Lower leg skin (tissue), 4 donors: ENCODE measurements at regions of chr1 and their contacts with region 1.

Region 1: DNA sequence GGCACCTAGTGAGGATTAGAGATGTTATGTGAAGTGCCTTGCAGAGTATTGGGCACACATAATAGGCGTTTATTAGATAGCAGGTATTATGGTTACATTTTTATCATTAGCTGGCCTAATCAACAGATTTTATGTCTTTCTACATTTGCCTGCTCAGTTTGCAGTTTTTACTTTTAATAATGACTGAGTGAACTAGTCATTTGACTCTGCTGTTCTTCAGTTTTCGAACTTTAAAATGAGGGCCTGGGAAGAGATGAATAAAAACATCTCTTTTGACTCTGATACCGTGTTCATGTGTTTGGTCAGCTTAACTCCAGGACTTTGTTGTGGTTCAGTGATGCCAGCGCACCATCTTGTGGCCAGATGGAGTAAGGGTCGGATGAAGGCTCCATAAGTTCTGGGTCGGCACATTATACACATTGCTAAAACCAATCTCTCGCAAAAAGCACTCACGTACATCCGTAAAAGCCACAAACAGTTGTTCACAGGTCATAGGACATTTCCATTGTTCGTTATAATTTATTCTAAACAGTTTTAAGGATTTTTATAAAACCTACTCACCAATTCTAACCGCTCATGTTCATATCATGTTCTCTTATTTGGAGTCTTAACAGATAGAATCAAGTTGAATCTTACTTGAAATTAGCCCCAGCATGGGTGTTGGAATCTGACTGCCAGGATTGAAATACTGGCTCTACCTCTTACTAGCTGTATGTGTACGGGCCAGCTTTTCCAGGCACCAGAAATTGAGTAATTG is 78.4 kb upstream of the GPR88 start:
- DNase-seq: peak; percentile 75 to 92
- H3K4me3 ChIP-seq: no peak overlapping the region
- CTCF ChIP-seq: peak in 1 of 3 donors; percentile 81
- POLR2A ChIP-seq: no peak

Region 2: DNA sequence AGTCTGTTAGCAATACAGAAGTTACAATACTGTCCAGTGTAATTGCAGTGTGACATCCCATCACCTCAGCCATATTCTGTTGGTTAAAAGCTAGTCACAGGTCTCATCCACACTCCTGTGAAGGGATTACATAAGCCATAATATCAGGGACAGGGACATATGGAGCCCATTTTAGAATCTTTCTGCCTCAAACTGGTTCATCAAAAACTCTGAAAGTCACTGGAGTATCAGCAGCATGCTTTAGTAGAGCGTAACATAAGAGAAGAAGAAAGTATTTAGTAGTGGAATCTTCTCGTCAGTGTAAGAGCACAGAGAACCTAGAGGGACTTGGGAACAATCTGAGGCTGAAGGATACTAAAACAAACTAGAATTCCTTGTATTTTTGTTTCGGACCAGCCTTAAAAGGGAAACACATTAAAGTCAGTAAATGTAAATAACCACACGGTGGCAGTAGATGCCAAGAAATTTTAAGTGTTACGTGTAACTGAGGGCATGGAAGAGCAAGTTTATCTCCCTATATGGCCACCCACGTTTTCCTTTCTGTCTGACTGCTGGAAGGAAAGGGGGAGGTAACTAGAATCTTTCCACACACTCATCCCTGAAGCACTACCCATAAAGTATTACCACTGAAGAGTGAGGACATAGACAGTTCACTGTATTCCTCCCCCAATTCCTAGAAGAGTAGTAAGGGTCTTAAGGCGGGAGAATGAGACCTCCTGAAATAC is 651.0 kb before region 1 on chr1:
- intact Hi-C with region 1: loop called (anchors 10 kb)
- DNase-seq: peak in 1 of 2 donors; percentile 46
- H3K4me3 ChIP-seq: no peak overlapping the region
- CTCF ChIP-seq: peak in 1 of 3 donors; percentile 33
- POLR2A ChIP-seq: no peak

Region 3: GRCh38 chr1:100866041-100866900 is 406.7 kb after region 1 on chr1:
- intact Hi-C with region 1: loop called (anchors 10 kb)
- DNase-seq: no peak
- H3K4me3 ChIP-seq: no peak overlapping the region
- CTCF ChIP-seq: no peak
- POLR2A ChIP-seq: no peak

Region 4: DNA sequence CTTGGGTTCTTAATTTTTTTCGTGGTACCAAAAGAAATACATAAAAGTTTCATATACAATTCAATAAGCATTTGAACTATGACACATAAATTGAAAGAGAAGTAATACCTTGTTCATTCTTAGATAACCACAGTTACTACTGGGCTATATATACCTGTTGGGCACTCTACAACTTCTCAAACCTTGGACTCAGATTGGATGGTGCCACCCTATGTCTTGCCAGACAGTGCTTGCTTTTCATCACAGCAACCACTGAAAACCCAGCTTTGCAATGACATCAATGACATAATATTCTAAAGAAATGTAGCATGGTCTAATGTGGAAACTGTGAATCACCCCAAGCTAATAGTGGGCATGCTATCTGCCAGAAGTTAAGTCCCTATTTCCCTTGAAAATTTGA is 628.9 kb after region 1 on chr1:
- intact Hi-C with region 1: no loop called
- DNase-seq: no peak
- H3K4me3 ChIP-seq: no peak overlapping the region
- CTCF ChIP-seq: no peak
- POLR2A ChIP-seq: no peak